ENCODE measurements at regions of chr1 and their contacts with region 1.

Region 1: DNA sequence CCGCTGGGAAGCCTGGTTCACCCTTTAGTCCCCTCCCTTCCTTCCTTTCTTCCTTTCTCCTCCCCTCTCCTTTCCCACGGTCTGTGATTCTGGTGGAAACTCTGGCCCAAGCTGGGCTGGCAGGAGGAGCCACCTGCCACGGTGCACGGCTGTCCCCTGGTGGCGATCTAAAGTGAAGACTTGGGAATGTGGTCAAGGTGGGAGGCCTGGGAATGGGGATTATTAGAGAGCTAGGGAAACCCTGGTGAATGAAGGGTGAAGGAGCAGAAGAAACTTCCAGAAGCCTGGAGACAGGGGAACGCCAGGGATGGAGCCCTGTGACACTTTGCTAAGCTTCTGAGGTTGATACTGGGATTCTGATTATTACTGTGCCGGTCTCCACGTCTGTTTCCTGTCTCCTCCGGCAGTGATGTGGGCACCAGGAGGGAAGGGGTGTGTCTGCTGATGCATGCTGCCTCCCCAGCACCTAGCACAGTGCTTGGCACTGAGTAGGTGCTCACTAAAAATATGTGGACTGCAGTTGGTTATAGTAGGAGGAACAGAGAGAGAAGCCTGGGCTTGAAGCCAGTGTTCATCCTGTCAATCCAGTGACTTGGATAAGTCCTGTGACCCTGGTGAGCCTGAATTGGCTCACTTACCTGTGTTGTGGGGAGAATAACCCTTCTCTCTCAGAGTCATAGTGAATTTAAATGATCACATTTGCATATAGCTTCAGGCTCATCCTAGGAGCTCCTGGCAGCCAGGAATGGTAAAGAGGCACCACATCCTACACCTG is 71.2 kb upstream of the NBPF3 start:
- DNase-seq: peak; percentile 86
- H3K4me3 ChIP-seq: no peak overlapping the region
- H3K27ac ChIP-seq: peak overlapping the region; percentile 1
- H3K4me1 ChIP-seq: no peaks in the 10 kb centered on the region
- H3K27me3 ChIP-seq: no peaks in the 10 kb centered on the region
- CTCF ChIP-seq: peak; percentile 98

Region 2: GRCh38 chr1:21232044-21232443 is 136.7 kb before region 1 on chr1:
- intact Hi-C with region 1: loop called (anchors 1 kb)
- DNase-seq: peak; percentile 67
- H3K4me3 ChIP-seq: no peak overlapping the region
- H3K27ac ChIP-seq: no peak overlapping the region
- H3K4me1 ChIP-seq: no peaks in the 10 kb centered on the region
- H3K27me3 ChIP-seq: no peaks in the 10 kb centered on the region
- CTCF ChIP-seq: peak; percentile 77

Region 3: GRCh38 chr1:21255278-21255942 is 113.3 kb before region 1 on chr1:
- intact Hi-C with region 1: loop called (anchors 1 kb)
- DNase-seq: peak; percentile 94
- H3K4me3 ChIP-seq: no peak overlapping the region
- H3K27ac ChIP-seq: no peak overlapping the region
- H3K4me1 ChIP-seq: peaks cover 13% of the 10 kb centered on the region
- H3K27me3 ChIP-seq: no peaks in the 10 kb centered on the region
- CTCF ChIP-seq: peak; percentile 72

Region 4: DNA sequence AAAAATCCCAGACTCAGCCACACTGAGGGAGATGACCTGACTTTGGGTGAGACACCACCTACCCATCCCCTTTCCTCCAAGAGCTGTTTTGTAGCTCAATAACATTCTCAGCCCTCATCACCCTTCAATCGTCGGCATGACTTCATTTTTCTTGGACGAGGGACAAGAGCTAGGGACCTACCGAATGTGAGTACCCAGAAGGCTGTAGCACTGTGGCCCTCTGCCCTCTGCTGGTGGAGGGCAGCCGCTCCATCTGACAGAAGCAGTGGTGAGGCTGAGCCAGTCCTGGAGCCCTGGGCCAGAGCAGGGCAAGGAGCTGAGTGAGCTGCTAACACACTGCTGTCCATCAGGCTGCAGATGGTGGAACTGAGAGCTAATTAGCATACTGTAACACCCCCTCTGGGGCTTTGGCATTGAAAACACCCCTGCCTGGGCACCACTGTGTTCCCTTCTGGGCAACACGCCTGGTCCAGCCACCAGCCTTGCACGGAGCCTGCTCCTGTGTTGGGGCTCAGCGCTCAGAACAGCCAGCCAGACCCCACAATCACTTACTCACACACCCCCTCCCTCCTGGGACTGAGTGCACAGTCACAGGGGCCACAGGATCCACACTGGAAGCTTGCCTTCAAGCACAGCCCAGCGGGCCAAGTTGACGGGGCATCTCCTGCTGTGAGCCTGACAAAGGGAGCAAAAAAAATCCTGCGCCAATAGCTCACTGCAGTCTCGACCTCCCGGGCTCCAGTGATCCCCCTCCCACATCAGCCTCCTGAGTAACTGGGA is 122.3 kb after region 1 on chr1:
- intact Hi-C with region 1: loop called (anchors 2 kb)
- DNase-seq: peak; percentile 35
- H3K4me3 ChIP-seq: no peak overlapping the region
- H3K27ac ChIP-seq: no peak overlapping the region
- H3K4me1 ChIP-seq: no peaks in the 10 kb centered on the region
- H3K27me3 ChIP-seq: no peaks in the 10 kb centered on the region
- CTCF ChIP-seq: peak; percentile 39

Region 5: GRCh38 chr1:21573971-21574465 is 205.3 kb after region 1 on chr1:
- intact Hi-C with region 1: loop called (anchors 5 kb)
- DNase-seq: peak; percentile 59
- H3K4me3 ChIP-seq: no peak overlapping the region
- H3K27ac ChIP-seq: no peak overlapping the region
- H3K4me1 ChIP-seq: peaks cover 3% of the 10 kb centered on the region
- H3K27me3 ChIP-seq: no peaks in the 10 kb centered on the region
- CTCF ChIP-seq: peak; percentile 42

Region 6: GRCh38 chr1:21659099-21659923 is 290.6 kb after region 1 on chr1:
- intact Hi-C with region 1: loop called (anchors 5 kb)
- DNase-seq: peak; percentile 68
- H3K4me3 ChIP-seq: no peak overlapping the region
- H3K27ac ChIP-seq: no peak overlapping the region
- H3K4me1 ChIP-seq: peaks cover 3% of the 10 kb centered on the region
- H3K27me3 ChIP-seq: peaks cover 7% of the 10 kb centered on the region
- CTCF ChIP-seq: peak; percentile 87

Measured in colonic mucosa (tissue), 4 donors.